Activated CD4-positive, alpha-beta T cell treated with anti-CD3 and anti-CD28 coated beads, Interleukin-2, amount 10 ng/mL, durations not matched to agents 24 days and 14 days (primary cell): ENCODE measurements at regions of chr16 and their contacts with region 1.

Region 1: DNA sequence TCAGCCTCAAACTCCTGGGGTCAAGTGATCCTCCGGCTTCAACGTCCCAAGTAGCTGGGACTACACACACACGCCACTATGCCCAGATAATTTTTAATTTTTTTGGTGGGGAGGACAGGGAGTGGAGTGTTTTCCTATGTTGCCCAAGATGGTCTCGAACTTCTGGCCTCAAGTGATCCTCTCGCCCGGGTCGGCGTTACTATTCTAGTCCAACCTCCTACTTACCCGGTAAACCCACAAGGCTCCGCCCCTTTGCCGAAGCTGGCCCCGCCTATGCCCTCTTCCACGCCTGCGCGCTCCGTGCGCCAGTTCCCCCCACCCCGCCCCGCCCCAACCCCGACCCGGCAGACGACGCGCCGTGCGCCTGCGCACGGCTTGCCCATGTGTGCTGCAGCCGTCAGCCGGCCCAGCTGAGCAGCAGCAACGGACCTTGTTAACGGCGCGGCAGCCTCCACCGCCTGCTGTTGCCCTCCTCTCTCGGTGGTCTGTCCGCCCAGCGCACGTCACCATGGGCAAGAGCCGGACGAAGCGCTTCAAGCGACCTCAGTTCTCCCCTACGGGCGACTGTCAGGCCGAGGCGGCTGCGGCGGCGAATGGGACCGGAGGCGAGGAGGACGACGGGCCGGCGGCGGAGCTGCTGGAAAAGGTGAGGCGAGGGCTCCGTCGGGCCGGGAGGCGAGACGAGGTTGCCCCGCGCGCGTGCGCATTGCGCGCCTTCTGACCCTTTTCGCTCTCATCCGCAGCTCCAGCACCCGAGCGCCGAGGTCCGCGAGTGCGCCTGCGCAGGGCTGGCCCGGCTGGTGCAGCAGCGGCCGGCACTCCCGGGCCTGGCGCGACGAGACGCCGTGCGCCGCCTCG is at the start of gene HEATR3:
- DNase-seq: peak; percentile 99
- H3K4me3 Mint-ChIP-seq: peak within 1 kb of the TSS; percentile 84
- H3K27ac Mint-ChIP-seq: peak within 1 kb of the TSS; percentile 94
- H3K4me1 Mint-ChIP-seq: peaks cover 29% of the 10 kb centered on the region
- H3K27me3 Mint-ChIP-seq: no peaks in the 10 kb centered on the region
- total RNA-seq, gene HEATR3: 28.5 and 29.2 TPM in 2 replicates

Region 2: DNA sequence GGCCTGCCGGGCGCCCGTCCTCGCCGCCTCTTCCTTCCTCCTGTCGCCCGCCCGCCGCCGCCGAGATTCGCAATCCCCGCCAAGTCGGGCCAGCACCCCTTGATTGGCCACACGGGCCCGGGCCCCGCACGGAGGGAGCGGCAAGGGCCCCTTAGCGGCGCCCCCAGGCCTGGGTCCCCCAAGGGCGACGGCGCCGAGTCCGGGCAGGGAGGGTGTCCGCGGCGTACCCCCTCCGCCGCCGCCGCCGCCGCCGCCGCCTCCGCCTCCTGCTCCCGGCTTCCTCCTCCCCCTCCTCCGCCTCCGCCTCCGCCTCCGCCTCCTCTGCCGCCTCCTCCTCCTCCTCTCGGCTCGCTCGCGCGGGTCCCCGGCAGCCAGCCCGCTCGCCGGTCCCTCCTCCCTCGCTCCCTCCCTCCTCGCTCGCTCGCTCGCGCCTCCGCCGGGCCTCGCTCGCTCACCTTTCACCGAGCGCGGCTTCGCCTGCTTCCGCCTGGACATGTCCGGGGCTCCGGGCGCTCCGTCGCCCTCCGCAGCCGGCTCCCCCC is 210.5 kb before region 1 on chr16:
- intact Hi-C with region 1: loop called (anchors 5 kb)
- DNase-seq: peak; percentile 92
- H3K4me3 Mint-ChIP-seq: peak overlapping the region; percentile 61
- H3K27ac Mint-ChIP-seq: no peak overlapping the region
- H3K4me1 Mint-ChIP-seq: peaks cover 3% of the 10 kb centered on the region
- H3K27me3 Mint-ChIP-seq: peaks cover 51% of the 10 kb centered on the region

Region 3: GRCh38 chr16:50024684-50025536 is 40.9 kb before region 1 on chr16 and contains the start of gene CNEP1R1:
- intact Hi-C with region 1: loop called (anchors 1 kb)
- DNase-seq: peak; percentile 98
- H3K4me3 Mint-ChIP-seq: peak within 1 kb of the TSS; percentile 97
- H3K27ac Mint-ChIP-seq: peak within 1 kb of the TSS; percentile 88
- H3K4me1 Mint-ChIP-seq: peaks cover 17% of the 10 kb centered on the region
- H3K27me3 Mint-ChIP-seq: peaks cover 11% of the 10 kb centered on the region
- total RNA-seq, gene CNEP1R1: 22.3 and 23.0 TPM in 2 replicates

Region 4: GRCh38 chr16:50050802-50051201 is 15.1 kb before region 1 on chr16:
- intact Hi-C with region 1: no loop called
- DNase-seq: no peak
- H3K4me3 Mint-ChIP-seq: no peak overlapping the region
- H3K27ac Mint-ChIP-seq: no peak overlapping the region
- H3K4me1 Mint-ChIP-seq: no peaks in the 10 kb centered on the region
- H3K27me3 Mint-ChIP-seq: peaks cover 17% of the 10 kb centered on the region

Region 5: DNA sequence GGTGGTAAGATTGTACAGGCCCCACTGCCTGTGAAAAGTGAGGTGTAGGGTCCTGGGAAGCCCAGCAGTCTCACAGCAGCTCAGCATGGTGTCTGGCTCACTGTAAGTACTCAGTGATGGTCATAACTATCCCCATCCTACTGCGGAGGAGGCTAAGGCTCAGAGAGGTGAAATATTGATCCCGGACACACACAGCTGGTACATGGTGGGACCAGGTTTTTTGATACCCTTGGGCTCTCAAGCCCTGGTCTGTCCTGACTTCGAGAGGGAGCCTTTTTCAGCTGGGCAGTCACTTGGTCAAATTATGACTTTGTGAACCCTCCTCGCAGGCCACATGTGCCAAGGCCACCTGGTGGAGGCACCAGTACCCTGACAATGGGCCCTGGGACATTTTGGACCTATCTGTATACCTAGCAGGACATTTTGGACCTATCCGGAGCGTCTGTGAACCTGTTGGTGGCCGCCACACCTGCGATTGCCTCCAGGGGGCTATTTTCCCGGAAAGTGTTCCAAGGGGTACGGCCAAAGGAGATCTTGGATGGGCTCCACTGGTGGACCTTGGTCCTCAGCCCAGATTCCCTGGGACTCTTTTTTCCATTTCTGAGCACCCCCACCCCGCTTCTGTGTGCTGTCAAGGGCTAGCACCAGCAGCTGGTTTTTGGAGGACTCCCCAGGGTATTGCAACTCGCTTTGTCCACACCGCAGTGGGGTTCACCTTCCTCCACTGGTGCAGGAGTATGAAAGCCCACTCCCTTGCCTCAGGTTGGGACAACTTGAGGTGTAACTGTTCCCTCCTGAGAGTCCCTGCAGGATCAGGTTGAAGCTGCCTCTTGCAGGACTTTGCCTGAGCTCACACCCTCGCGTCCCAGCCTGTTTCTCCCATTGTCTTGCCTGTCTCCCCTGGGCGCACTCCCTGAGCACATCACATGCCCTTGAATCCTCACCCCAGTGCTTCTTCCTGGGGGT is 398.8 kb after region 1 on chr16:
- intact Hi-C with region 1: no loop called
- DNase-seq: no peak
- H3K4me3 Mint-ChIP-seq: no peak overlapping the region
- H3K27ac Mint-ChIP-seq: no peak overlapping the region
- H3K4me1 Mint-ChIP-seq: no peaks in the 10 kb centered on the region
- H3K27me3 Mint-ChIP-seq: peaks cover 36% of the 10 kb centered on the region